Activated naive CD4-positive, alpha-beta T cell treated with anti-CD3 and anti-CD28 coated beads for 36 hours (primary cell): ENCODE measurements at regions of chr10 and their contacts with region 1.

Region 1: GRCh38 chr10:25016376-25017154 is at the start of gene THNSL1:
- DNase-seq: peak; percentile 97
- H3K4me3 Mint-ChIP-seq: peak within 1 kb of the TSS; percentile 93
- H3K27ac Mint-ChIP-seq: peak within 1 kb of the TSS; percentile 99
- H3K4me1 Mint-ChIP-seq: peaks cover 19% of the 10 kb centered on the region
- H3K27me3 Mint-ChIP-seq: no peaks in the 10 kb centered on the region
- total RNA-seq, gene THNSL1: 6.3 to 7.1 TPM

Region 2: GRCh38 chr10:24882047-24882698 is 134.4 kb before region 1 on chr10:
- CTCF ChIA-PET with region 1: no interaction called
- intact Hi-C with region 1: loop called (anchors 1 kb)
- DNase-seq: peak; percentile 71
- H3K4me3 Mint-ChIP-seq: peak overlapping the region; percentile 13
- H3K27ac Mint-ChIP-seq: no peak overlapping the region
- H3K4me1 Mint-ChIP-seq: peaks cover 44% of the 10 kb centered on the region
- H3K27me3 Mint-ChIP-seq: no peaks in the 10 kb centered on the region

Region 3: DNA sequence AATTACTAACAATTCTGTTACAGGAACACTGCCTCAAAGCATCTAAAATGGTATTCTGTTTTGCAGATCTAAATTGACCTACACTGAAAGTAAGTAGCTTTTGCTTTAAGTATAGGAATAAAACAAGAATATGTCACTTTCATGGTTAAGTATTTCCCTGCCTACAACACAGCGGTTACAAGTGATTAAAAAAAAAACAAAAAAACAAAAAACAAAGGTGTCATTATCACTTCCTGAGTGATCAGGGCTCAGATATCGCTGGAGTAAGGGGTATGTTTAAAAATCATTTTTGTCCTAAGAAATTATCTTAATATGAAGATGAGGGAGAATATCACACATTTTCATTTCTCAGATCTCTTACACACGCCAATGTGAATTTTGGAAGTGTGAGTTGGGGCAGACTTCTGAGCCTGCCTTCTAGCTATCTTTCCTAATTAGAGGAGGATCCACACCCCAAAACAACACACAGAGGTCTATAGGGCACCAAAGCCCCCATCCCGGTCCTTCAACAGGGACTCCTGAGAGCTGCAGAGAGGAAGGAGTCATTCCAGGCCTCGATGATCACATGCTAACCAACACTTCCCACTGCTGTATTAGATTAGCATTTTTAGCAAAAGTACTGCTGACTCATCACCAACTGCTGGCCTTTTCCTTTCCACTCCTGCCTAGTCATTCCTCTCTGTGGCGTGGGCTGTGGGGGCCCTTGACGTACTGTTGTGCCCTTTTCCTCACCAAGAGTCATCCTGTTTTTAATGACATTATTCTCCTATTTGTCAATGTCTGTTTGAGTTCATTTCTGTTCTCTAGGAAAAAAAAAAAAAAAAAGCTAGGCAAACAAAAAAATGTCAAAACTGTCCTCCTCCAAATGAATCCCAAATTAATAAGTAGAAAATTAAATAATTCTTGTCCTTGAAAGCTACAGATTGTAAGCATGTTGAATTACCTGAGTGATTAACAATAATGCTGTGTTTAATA is 95.4 kb before region 1 on chr10:
- CTCF ChIA-PET with region 1: no interaction called
- intact Hi-C with region 1: loop called (anchors 1 kb)
- DNase-seq: peak; percentile 83
- H3K4me3 Mint-ChIP-seq: no peak overlapping the region
- H3K27ac Mint-ChIP-seq: peak overlapping the region; percentile 54
- H3K4me1 Mint-ChIP-seq: peaks cover 19% of the 10 kb centered on the region
- H3K27me3 Mint-ChIP-seq: no peaks in the 10 kb centered on the region

Region 4: DNA sequence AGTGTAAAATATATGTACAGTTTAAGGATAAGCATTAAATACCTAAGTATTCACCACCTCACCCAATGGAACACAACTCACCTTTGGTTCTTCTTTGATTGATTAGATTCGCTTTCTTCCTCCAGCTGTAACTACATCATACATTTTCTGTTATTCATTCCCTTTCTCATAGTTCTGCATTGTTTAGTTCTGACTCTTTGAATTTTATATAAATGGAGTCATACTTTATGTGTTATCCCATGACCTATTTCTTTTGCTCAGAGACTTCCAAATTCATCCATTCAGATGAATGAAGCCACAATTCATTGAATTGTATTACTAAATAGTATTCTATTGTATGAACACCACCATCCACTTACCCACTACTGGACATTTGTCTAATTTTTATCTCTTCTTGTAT is 12.1 kb after region 1 on chr10:
- CTCF ChIA-PET with region 1: no interaction called
- intact Hi-C with region 1: no loop called
- DNase-seq: no peak
- H3K4me3 Mint-ChIP-seq: no peak overlapping the region
- H3K27ac Mint-ChIP-seq: no peak overlapping the region
- H3K4me1 Mint-ChIP-seq: no peaks in the 10 kb centered on the region
- H3K27me3 Mint-ChIP-seq: no peaks in the 10 kb centered on the region

Region 5: DNA sequence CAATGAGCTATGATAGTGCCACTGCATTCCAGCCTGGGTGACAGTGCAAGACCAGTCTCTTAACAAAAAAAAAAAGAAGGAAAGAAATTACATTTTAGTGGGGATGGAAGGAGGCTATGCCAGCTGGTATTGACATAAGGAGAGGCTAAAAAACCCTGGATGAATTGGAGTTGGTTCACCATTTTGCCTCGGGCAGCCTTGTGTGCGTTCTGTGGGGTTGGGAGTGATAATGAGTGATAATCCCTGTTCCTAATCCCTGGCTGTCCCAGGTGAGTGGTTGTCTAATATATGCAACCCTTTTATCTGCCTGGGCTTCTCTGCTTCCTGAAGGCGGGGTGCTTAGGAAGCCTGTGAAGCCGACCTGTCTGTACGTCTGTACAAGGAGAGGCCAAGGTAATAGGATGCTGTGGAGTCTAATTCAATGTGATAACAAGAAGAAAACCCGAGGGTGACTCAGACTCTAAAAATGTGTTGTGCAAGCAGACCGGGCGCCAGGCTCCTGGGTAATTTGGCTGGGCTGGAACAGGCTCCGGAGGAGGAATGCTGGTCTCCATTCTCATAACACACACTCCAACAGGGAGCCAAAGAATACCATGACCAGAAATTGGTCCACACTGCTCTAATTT is 43.3 kb after region 1 on chr10:
- CTCF ChIA-PET with region 1: no interaction called
- intact Hi-C with region 1: loop called (anchors 1 kb)
- DNase-seq: no peak
- H3K4me3 Mint-ChIP-seq: no peak overlapping the region
- H3K27ac Mint-ChIP-seq: no peak overlapping the region
- H3K4me1 Mint-ChIP-seq: peaks cover 18% of the 10 kb centered on the region
- H3K27me3 Mint-ChIP-seq: no peaks in the 10 kb centered on the region

Region 6: GRCh38 chr10:26437637-26438461 is 1421.3 kb after region 1 on chr10 and contains the start of gene APBB1IP:
- CTCF ChIA-PET with region 1: no interaction called
- intact Hi-C with region 1: loop called (anchors 5 kb)
- DNase-seq: peak; percentile 58
- H3K4me3 Mint-ChIP-seq: peak within 1 kb of the TSS; percentile 81
- H3K27ac Mint-ChIP-seq: peak within 1 kb of the TSS; percentile 98
- H3K4me1 Mint-ChIP-seq: peaks cover 50% of the 10 kb centered on the region
- H3K27me3 Mint-ChIP-seq: no peaks in the 10 kb centered on the region
- total RNA-seq, gene APBB1IP: 29.4 to 30.9 TPM